ENCODE measurements at regions of chr5 and their contacts with region 1.

Region 1: GRCh38 chr5:142699184-142699720 is 13.4 kb upstream of the FGF1 start:
- DNase-seq: peak; percentile 94

Region 2: GRCh38 chr5:142151436-142152383 is 547.5 kb before region 1 on chr5:
- intact Hi-C with region 1: loop called (anchors 5 kb)
- DNase-seq: no peak

Region 3: DNA sequence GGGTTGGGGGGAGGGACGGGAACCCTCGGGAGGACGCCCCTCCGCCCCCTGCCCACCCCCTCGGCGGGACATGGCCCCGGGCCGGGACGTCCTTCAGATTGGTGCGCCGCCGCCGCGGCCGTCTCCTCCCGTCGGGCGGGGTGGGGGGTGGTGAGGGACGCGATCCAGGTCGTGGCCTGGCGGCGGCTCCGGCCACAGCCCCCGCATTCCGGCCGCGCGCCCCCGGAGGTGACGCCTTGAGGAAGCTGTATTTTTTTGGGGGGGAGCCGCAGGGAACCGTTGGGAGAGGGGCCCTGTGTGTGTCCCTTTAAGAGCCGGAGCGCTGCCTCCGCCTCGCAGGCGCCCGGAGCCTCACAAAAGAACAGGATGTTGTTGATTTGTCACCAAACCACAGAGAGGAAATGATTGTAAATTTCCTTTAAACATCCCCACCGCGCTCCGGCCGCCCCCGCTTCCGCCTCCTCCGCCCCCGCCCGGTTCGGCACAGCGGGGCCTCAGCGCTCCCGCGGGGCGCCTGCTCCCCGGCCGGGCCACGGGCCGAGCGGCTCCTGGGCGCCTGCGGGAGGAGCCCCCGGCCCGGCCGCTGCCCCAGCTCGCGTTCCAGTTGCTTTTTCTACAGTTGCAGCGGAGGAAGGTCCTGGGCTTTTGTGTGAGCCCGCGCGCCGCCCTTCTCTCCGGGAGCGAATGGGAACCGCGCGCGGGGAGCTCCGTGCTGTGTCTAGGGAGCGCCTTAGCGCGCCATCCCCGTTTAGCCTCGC is 342.4 kb before region 1 on chr5:
- intact Hi-C with region 1: loop called (anchors 5 kb)
- DNase-seq: peak; percentile 94

Region 4: GRCh38 chr5:142611154-142611553 is 88.1 kb before region 1 on chr5:
- intact Hi-C with region 1: loop called (anchors 2 kb)
- DNase-seq: no peak

Region 5: GRCh38 chr5:142655339-142656267 is 43.6 kb before region 1 on chr5:
- intact Hi-C with region 1: loop called (anchors 1 kb)
- DNase-seq: peak; percentile 91

Region 6: GRCh38 chr5:142845402-142845921 is 146.2 kb after region 1 on chr5:
- intact Hi-C with region 1: no loop called
- DNase-seq: no peak

Measured in cardiac septum (tissue), 1 donor.